CD4-positive, alpha-beta T cell (primary cell): ENCODE measurements at regions of chr13 and their contacts with region 1.

Region 1: GRCh38 chr13:43354153-43354945 is 331.0 kb downstream of the DNAJC15 start:
- DNase-seq: no peak
- ATAC-seq: no peak
- H3K4me3 ChIP-seq: no peak overlapping the region
- H3K4me3 Mint-ChIP-seq: no peak overlapping the region
- H3K27ac ChIP-seq: no peak overlapping the region
- H3K27ac Mint-ChIP-seq: no peak overlapping the region
- H3K4me1 ChIP-seq: no peaks in the 10 kb centered on the region
- H3K4me1 Mint-ChIP-seq: no peaks in the 10 kb centered on the region
- H3K27me3 ChIP-seq: no peaks in the 10 kb centered on the region
- H3K27me3 Mint-ChIP-seq: no peaks in the 10 kb centered on the region
- CTCF ChIP-seq: no peak

Region 2: DNA sequence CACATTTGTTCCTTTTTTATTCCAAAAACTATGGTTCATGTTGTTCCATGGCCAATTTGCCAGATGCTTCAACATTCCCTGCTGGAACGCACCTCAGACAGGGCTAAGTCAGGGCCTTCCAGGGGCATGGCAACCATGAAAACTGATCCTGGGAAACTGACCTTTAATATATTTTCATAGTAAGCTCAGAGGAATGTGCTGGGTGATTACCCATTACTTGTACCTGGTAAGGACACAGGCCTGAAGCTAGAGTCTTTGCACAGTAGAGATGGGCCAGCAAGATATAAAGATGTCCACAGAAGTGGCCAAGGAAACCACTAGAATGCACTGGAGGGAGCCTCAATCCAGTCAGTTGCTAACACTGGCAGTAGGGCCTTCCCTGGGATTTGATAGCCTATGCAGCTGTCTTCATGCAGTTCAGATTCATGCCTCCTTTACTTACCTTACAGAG is 79.4 kb after region 1 on chr13:
- CTCF ChIA-PET with region 1: no interaction called
- POLR2A ChIA-PET with region 1: no interaction called
- intact Hi-C with region 1: loop called in 1 of 2 experiments (anchors 5 kb)
- DNase-seq: no peak
- ATAC-seq: no peak
- H3K4me3 ChIP-seq: no peak overlapping the region
- H3K4me3 Mint-ChIP-seq: no peak overlapping the region
- H3K27ac ChIP-seq: no peak overlapping the region
- H3K27ac Mint-ChIP-seq: no peak overlapping the region
- H3K4me1 ChIP-seq: no peaks in the 10 kb centered on the region
- H3K4me1 Mint-ChIP-seq: no peaks in the 10 kb centered on the region
- H3K27me3 ChIP-seq: peaks cover 0 to 6% of the 10 kb centered on the region in 2 experiments
- H3K27me3 Mint-ChIP-seq: no peaks in the 10 kb centered on the region
- CTCF ChIP-seq: no peak

Region 3: GRCh38 chr13:44068737-44069136 is 714.4 kb after region 1 on chr13:
- CTCF ChIA-PET with region 1: no interaction called
- POLR2A ChIA-PET with region 1: no interaction called
- intact Hi-C with region 1: no loop called
- DNase-seq: no peak
- ATAC-seq: no peak
- H3K4me3 ChIP-seq: no peak overlapping the region
- H3K4me3 Mint-ChIP-seq: no peak overlapping the region
- H3K27ac ChIP-seq: no peak overlapping the region
- H3K27ac Mint-ChIP-seq: no peak overlapping the region
- H3K4me1 ChIP-seq: no peaks in the 10 kb centered on the region
- H3K4me1 Mint-ChIP-seq: no peaks in the 10 kb centered on the region
- H3K27me3 ChIP-seq: peaks cover 0 to 5% of the 10 kb centered on the region in 2 experiments
- H3K27me3 Mint-ChIP-seq: peaks cover 5% of the 10 kb centered on the region
- CTCF ChIP-seq: no peak